Activated CD4-positive, alpha-beta T cell treated with anti-CD3 and anti-CD28 coated beads, Interleukin-2, amount 10 ng/mL, durations not matched to agents 24 days and 14 days (primary cell): ENCODE measurements at regions of chr3 and their contacts with region 1.

Region 1: GRCh38 chr3:105827959-105828358 is 40.9 kb downstream of the CBLB start:
- DNase-seq: peak; percentile 68
- H3K4me3 Mint-ChIP-seq: peak overlapping the region; percentile 60
- H3K27ac Mint-ChIP-seq: peak overlapping the region; percentile 100
- H3K4me1 Mint-ChIP-seq: peaks cover 73% of the 10 kb centered on the region
- H3K27me3 Mint-ChIP-seq: no peaks in the 10 kb centered on the region

Region 2: GRCh38 chr3:105676621-105677300 is 151.2 kb before region 1 on chr3:
- intact Hi-C with region 1: loop called (anchors 2 kb)
- DNase-seq: peak; percentile 48
- H3K4me3 Mint-ChIP-seq: no peak overlapping the region
- H3K27ac Mint-ChIP-seq: peak overlapping the region; percentile 89
- H3K4me1 Mint-ChIP-seq: peaks cover 26% of the 10 kb centered on the region
- H3K27me3 Mint-ChIP-seq: no peaks in the 10 kb centered on the region

Region 3: GRCh38 chr3:105752744-105753415 is 75.1 kb before region 1 on chr3:
- intact Hi-C with region 1: loop called (anchors 1 kb)
- DNase-seq: peak; percentile 83
- H3K4me3 Mint-ChIP-seq: peak overlapping the region; percentile 64
- H3K27ac Mint-ChIP-seq: peak overlapping the region; percentile 95
- H3K4me1 Mint-ChIP-seq: peaks cover 67% of the 10 kb centered on the region
- H3K27me3 Mint-ChIP-seq: no peaks in the 10 kb centered on the region

Region 4: GRCh38 chr3:105806361-105806760 is 21.6 kb before region 1 on chr3:
- intact Hi-C with region 1: loop called (anchors 1 kb)
- DNase-seq: peak; percentile 75
- H3K4me3 Mint-ChIP-seq: peak overlapping the region; percentile 36
- H3K27ac Mint-ChIP-seq: peak overlapping the region; percentile 93
- H3K4me1 Mint-ChIP-seq: peaks cover 44% of the 10 kb centered on the region
- H3K27me3 Mint-ChIP-seq: no peaks in the 10 kb centered on the region

Region 5: GRCh38 chr3:106206146-106206545 is 378.2 kb after region 1 on chr3:
- intact Hi-C with region 1: loop called (anchors 5 kb)
- DNase-seq: peak; percentile 75
- H3K4me3 Mint-ChIP-seq: peak overlapping the region; percentile 65
- H3K27ac Mint-ChIP-seq: peak overlapping the region; percentile 97
- H3K4me1 Mint-ChIP-seq: peaks cover 39% of the 10 kb centered on the region
- H3K27me3 Mint-ChIP-seq: no peaks in the 10 kb centered on the region

Region 6: DNA sequence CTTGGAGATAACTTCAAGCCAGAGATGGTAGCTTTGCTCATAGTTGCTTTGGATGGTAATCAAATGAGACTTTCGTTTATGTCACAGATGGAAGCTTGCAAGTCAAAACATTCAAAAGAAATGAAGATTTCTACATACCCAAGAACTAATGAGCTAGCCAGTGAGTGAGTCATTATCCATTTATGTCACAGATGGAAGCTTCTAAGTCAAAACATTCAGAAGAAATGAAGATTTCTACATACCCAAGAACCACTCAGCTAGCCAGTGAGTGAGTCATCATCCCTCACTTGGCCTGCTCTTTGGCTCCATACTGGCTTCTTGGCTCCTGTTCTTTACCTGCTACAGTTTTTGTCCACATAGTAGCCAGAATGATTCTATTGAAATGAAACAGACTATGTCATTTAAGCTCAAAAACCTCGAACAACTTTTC is 600.6 kb after region 1 on chr3:
- intact Hi-C with region 1: loop called (anchors 1 kb)
- DNase-seq: no peak
- H3K4me3 Mint-ChIP-seq: peak overlapping the region; percentile 25
- H3K27ac Mint-ChIP-seq: peak overlapping the region; percentile 96
- H3K4me1 Mint-ChIP-seq: peaks cover 42% of the 10 kb centered on the region
- H3K27me3 Mint-ChIP-seq: no peaks in the 10 kb centered on the region